ENCODE measurements at regions of chr6 and their contacts with region 1.

Region 1: GRCh38 chr6:134822920-134823709 is 126.8 kb downstream of the ALDH8A1 start:
- DNase-seq: peak; percentile 77
- H3K4me3 ChIP-seq: no peak overlapping the region; a peak in 1 of 4 replicates
- H3K27ac ChIP-seq: no peak overlapping the region
- H3K4me1 ChIP-seq: peaks cover 0 to 5% of the 10 kb centered on the region in 2 experiments; a peak in 3 of 4 replicates
- H3K27me3 ChIP-seq: no peaks in the 10 kb centered on the region
- CTCF ChIP-seq: peak; percentile 80
- EP300 ChIP-seq: no peak
- RAD21 ChIP-seq: peak; percentile 99

Region 2: DNA sequence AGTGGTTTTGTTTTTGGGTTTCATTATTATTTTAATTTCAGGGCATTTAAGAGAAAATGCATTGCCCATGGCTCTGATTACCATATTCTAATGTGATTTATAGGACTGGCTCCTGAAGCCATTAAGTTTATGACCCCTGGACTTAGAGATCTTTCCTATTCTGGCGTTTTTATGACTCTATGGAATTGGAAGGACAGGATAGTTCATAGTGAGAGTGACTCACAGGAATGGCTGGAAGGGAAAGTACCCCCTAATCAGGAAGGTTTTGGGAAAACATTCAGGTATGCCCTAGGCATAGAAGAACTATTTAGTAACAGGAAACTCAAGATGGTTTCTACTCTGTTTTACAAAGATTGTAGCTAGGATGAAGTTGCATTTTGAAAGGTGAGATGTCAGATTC is 662.1 kb before region 1 on chr6:
- CTCF ChIA-PET with region 1: interaction called, 29 read pairs
- POLR2A ChIA-PET with region 1: no interaction called
- DNase-seq: no peak
- H3K4me3 ChIP-seq: no peak overlapping the region
- H3K27ac ChIP-seq: no peak overlapping the region
- H3K4me1 ChIP-seq: no peaks in the 10 kb centered on the region
- H3K27me3 ChIP-seq: no peaks in the 10 kb centered on the region
- CTCF ChIP-seq: no peak
- EP300 ChIP-seq: no peak
- RAD21 ChIP-seq: no peak

Region 3: GRCh38 chr6:134174672-134175198 is 648.4 kb before region 1 on chr6:
- CTCF ChIA-PET with region 1: interaction called, 48 read pairs
- POLR2A ChIA-PET with region 1: interaction called, 3 read pairs
- DNase-seq: peak; percentile 90
- H3K4me3 ChIP-seq: peak overlapping the region; percentile 76 to 78
- H3K27ac ChIP-seq: peak overlapping the region; percentile 76 to 94
- H3K4me1 ChIP-seq: peaks cover 16 to 32% of the 10 kb centered on the region in 2 experiments
- H3K27me3 ChIP-seq: no peaks in the 10 kb centered on the region
- CTCF ChIP-seq: no peak
- EP300 ChIP-seq: peak in 1 of 2 experiments; percentile 52; a peak in 1 of 4 replicates
- RAD21 ChIP-seq: peak; percentile 38

Region 4: DNA sequence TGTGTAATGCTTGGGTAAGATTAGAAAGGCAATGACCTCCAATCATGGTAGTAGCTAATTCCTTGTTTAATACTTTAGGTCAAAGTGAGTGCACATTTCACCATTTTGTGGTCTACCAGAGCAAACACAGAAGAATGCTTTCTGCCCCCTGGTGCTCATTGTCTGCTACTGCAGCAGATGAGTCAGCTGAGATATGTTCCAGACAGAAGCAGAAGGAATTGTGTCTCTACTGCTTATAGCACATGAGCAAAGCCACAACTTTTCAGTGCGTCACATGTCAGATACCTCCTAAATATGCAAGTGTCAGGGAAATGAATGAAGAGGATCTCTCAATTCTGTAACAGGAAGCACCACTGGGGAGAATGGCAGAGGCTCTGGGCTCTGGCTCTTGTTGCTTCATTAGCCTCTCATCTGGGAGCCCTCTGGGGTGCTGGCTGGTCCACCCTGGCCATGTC is 182.1 kb before region 1 on chr6:
- CTCF ChIA-PET with region 1: interaction called, 38 read pairs
- POLR2A ChIA-PET with region 1: no interaction called
- DNase-seq: peak; percentile 57
- H3K4me3 ChIP-seq: no peak overlapping the region; a peak in 1 of 4 replicates
- H3K27ac ChIP-seq: no peak overlapping the region; a peak in 1 of 4 replicates
- H3K4me1 ChIP-seq: peaks cover 0 to 3% of the 10 kb centered on the region in 2 experiments; a peak in 2 of 4 replicates
- H3K27me3 ChIP-seq: no peaks in the 10 kb centered on the region
- CTCF ChIP-seq: peak; percentile 84
- EP300 ChIP-seq: no peak
- RAD21 ChIP-seq: peak; percentile 83

Region 5: DNA sequence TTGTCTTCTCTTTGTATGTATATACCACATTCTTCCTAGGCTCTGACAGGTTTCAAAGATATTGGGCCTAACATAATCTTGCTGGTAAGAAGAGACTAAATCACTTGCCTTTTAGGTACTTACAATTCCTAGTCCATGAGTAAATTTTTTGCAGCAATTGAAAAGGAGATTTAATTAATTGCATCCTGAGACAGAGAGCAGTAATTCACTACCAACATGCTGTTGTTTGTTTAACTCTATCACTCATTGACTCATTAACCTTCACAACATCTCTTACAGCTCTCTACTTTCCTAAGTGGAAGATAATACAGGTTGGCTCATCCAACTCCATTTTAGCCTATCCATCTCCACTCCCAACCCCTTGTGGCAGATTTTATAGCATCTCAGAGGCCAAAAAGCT is 153.6 kb before region 1 on chr6:
- CTCF ChIA-PET with region 1: no interaction called
- POLR2A ChIA-PET with region 1: no interaction called
- DNase-seq: no peak
- H3K4me3 ChIP-seq: no peak overlapping the region
- H3K27ac ChIP-seq: no peak overlapping the region
- H3K4me1 ChIP-seq: no peaks in the 10 kb centered on the region
- H3K27me3 ChIP-seq: no peaks in the 10 kb centered on the region
- CTCF ChIP-seq: no peak
- EP300 ChIP-seq: no peak
- RAD21 ChIP-seq: no peak

Region 6: DNA sequence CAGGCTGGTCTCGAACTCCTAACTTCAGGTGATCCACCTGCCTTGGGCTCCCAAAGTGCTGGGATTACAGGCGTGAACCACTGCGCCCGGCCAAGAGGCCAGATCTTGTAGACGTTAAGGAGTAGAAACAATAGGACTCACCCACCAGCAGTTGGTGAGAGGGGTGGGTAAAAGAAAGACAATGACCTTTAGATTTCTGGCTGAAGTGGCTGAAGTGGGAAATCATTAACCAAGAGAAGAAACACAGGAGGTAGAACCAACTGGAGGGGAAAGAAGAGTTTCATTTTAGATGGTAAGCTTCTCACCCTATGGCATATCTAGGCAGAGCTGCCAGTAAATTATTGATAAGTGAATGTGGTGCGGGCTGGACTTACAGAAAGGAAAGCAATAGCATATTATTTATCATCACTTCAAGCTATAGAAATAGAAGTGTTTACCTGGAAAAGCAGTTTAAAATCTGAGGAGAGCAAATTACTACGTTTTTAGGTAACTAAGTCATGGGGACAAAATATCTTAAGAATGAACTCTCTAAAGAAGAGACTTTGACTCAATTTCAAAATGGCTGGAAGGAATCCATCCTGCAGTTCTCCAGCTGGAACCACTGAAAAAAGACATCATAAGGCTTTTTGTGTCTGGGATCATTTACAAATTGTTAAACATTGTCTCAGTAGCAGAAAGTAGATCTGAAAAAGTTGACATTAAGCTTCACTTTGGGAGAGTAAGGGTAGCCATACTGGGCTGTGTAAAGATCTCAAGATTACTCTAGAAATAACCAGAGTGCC is 17.2 kb after region 1 on chr6:
- CTCF ChIA-PET with region 1: interaction called, 13 read pairs
- POLR2A ChIA-PET with region 1: no interaction called
- DNase-seq: no peak
- H3K4me3 ChIP-seq: no peak overlapping the region
- H3K27ac ChIP-seq: no peak overlapping the region
- H3K4me1 ChIP-seq: no peaks in the 10 kb centered on the region
- H3K27me3 ChIP-seq: no peaks in the 10 kb centered on the region
- CTCF ChIP-seq: no peak
- EP300 ChIP-seq: no peak
- RAD21 ChIP-seq: no peak

Region 7: GRCh38 chr6:134902074-134902861 is 79.2 kb after region 1 on chr6:
- CTCF ChIA-PET with region 1: no interaction called
- POLR2A ChIA-PET with region 1: no interaction called
- DNase-seq: no peak
- H3K4me3 ChIP-seq: no peak overlapping the region
- H3K27ac ChIP-seq: no peak overlapping the region
- H3K4me1 ChIP-seq: no peaks in the 10 kb centered on the region
- H3K27me3 ChIP-seq: no peaks in the 10 kb centered on the region
- CTCF ChIP-seq: no peak
- EP300 ChIP-seq: no peak
- RAD21 ChIP-seq: no peak

Measured in SK-N-SH (cell line).